ENCODE measurements at regions of chr20 and their contacts with region 1.

Region 1: GRCh38 chr20:48722737-48723191 is 105.0 kb downstream of the PREX1 start:
- DNase-seq: peak; percentile 83 to 85
- ATAC-seq: peak; percentile 82
- H3K4me3 ChIP-seq: no peak overlapping the region
- H3K27ac ChIP-seq: peak overlapping the region; percentile 98 to 99
- H3K4me1 ChIP-seq: peaks cover 5 to 6% of the 10 kb centered on the region in 2 donors
- H3K27me3 ChIP-seq: no peaks in the 10 kb centered on the region

Region 2: DNA sequence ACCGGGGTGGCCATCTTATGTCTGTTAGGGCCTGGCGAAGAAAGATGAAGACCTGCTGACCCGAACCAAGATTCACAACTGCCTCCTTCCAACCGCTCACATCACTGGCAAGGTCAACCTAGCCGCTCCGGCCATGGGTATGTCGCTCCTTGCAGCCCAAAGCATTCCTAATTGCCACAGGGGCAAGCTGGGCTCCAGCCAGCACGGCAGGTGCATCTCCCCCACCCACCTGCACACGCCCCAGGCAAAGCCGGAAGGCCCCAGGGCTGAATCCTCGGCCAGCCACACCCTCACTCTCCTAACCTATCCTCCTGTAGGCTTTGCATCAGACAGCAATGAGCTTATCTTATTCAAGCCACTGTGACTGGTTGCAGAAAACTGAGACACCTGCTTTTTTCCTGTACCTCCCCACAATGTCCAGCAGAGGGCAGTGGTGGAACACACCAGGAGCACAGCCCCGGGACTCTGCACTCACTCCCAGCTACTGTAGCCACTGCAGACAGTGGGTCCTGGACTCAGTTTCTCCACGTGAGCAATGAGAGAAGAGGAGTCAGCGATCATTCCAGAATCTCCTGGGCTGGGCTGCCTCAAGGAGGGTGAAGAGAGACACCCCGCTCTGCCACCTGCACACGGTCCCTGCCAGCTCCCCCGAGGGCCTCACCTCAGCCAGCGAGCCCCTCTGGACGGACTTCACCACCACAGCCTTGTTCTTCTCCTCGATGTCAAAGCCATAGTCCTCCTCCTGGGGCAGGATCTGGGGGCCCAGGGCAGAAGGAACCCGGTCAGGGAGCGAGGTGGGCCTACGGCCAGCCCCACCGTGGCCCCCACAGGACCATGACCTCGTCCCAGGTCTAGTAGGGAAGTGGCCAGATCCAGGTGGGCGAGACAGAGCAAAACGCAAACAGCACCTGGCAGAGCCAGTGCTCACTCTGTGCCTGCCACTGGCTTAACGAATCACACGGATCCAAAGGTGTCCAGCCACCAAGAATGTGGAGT is 65.0 kb before region 1 on chr20:
- intact Hi-C with region 1: loop called (anchors 1 to 2 kb)
- DNase-seq: peak in 1 of 2 donors; percentile 77
- ATAC-seq: peak; percentile 87
- H3K4me3 ChIP-seq: no peak overlapping the region
- H3K27ac ChIP-seq: no peak overlapping the region
- H3K4me1 ChIP-seq: peaks cover 0 to 7% of the 10 kb centered on the region in 2 donors
- H3K27me3 ChIP-seq: no peaks in the 10 kb centered on the region

Region 3: DNA sequence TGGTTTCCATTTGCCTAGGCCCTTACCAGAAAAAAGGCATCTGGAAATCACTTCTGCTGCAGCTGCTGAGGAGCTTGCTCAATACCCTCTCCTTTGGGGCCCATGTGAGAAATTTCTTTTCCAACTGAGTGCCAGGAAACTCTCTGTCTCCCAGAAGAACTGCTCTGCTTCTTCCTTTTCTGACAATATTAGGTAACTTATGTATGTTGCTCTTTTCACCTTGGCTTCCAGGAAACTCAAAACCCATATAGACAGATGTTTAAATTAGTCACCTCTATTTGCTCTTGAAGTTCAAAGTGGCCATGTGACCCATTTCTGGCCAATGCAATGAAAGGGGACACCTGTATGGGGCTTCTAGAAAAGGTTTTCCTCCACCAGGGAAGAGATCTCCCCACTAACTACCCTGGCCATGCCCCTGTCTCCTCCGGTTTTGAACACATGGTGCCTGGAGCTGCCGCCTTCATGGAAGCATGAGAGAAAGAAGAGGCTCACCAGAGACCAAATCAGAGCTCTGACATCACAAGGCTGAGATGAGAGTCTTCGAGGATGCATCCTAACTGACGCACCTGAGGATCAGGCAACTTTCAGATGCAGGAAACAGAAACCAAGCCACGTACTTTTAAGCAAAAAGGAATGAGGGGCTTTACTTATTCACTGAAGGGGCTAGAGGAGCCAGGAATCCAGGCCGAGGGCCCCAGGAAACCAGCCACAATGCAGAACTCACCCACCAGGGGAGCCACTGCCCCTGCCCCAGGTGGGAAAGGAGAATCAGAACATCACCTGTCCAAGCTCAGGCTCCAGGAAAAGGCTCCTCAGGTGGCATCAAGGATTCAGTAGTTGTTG is 16.4 kb before region 1 on chr20:
- intact Hi-C with region 1: loop called in 1 of 2 experiments (anchors 1 kb)
- DNase-seq: peak in 1 of 2 donors; percentile 24
- ATAC-seq: no peak
- H3K4me3 ChIP-seq: no peak overlapping the region
- H3K27ac ChIP-seq: peak overlapping the region; percentile 88 to 99
- H3K4me1 ChIP-seq: peaks cover 9 to 14% of the 10 kb centered on the region in 2 donors
- H3K27me3 ChIP-seq: no peaks in the 10 kb centered on the region

Region 4: DNA sequence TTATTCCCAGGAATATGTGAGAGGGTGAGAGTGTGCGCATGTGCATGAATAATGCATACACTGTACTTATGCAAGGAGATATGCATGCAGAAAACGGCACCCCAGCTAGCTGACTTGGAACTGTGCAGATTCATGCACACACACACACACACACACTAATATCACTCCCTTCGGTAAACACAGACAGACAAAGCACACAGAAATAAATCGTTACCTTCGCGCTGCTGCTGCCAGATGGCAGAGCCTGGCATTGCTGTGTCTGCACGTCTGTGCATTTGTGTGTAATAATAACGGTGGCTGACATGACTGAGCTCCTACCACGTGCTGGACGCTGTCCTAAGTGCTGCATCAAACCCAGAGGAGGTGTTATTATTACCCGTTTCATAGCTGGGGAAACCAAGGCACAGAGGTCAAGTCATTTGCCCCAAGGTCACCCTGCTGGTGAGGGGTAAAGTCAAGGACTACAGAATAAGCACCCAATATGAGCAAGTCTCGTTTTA is 68.3 kb after region 1 on chr20:
- intact Hi-C with region 1: loop called in 1 of 2 experiments (anchors 5 kb)
- DNase-seq: no peak
- ATAC-seq: peak; percentile 25
- H3K4me3 ChIP-seq: no peak overlapping the region
- H3K27ac ChIP-seq: peak overlapping the region in 1 of 2 donors; percentile 43
- H3K4me1 ChIP-seq: no peaks in the 10 kb centered on the region
- H3K27me3 ChIP-seq: no peaks in the 10 kb centered on the region

Region 5: GRCh38 chr20:48828022-48828743 is 105.4 kb after region 1 on chr20:
- intact Hi-C with region 1: loop called (anchors 5 kb)
- DNase-seq: peak; percentile 91 to 94
- ATAC-seq: peak; percentile 86
- H3K4me3 ChIP-seq: peak overlapping the region; percentile 94 to 97
- H3K27ac ChIP-seq: peak overlapping the region in 1 of 2 donors; percentile 9
- H3K4me1 ChIP-seq: peaks cover 4% of the 10 kb centered on the region in 2 donors
- H3K27me3 ChIP-seq: no peaks in the 10 kb centered on the region

Region 6: GRCh38 chr20:48904365-48905296 is 181.9 kb after region 1 on chr20:
- intact Hi-C with region 1: loop called in 1 of 2 experiments (anchors 10 kb)
- DNase-seq: no peak
- ATAC-seq: peak; percentile 77
- H3K4me3 ChIP-seq: no peak overlapping the region
- H3K27ac ChIP-seq: no peak overlapping the region
- H3K4me1 ChIP-seq: no peaks in the 10 kb centered on the region
- H3K27me3 ChIP-seq: no peaks in the 10 kb centered on the region